WTC11 (cell line): ENCODE measurements at regions of chr16 and their contacts with region 1.

Region 1: DNA sequence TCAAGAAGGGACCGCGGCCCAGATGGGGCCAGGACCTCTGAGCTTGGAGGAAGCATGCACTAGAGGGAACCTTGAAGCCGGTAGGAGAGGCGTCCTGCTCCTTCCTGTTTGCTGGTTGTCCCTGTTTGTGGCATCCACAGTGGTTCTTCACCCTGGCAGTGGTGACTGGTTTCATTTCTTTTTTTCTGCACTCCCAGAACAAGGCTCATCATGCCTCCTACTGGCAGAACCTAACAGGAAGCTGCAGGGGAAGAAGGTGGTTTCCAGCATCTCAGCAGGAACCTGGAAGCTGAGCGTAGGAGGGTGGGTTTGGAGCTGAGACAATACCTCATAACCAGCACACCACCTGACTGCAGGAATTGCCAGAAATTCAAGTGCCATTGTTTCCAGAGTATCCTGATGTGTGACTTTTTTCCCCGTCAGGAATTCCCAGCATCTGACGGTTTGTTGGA is 5.8 kb downstream of the TMEM231 start:
- DNase-seq: peak; percentile 62
- ATAC-seq: peak; percentile 84
- H3K4me3 Mint-ChIP-seq: no peak overlapping the region
- H3K27ac Mint-ChIP-seq: peak overlapping the region; percentile 46
- H3K4me1 Mint-ChIP-seq: peaks cover 16% of the 10 kb centered on the region
- H3K27me3 Mint-ChIP-seq: no peaks in the 10 kb centered on the region
- CTCF ChIP-seq: no peak

Region 2: DNA sequence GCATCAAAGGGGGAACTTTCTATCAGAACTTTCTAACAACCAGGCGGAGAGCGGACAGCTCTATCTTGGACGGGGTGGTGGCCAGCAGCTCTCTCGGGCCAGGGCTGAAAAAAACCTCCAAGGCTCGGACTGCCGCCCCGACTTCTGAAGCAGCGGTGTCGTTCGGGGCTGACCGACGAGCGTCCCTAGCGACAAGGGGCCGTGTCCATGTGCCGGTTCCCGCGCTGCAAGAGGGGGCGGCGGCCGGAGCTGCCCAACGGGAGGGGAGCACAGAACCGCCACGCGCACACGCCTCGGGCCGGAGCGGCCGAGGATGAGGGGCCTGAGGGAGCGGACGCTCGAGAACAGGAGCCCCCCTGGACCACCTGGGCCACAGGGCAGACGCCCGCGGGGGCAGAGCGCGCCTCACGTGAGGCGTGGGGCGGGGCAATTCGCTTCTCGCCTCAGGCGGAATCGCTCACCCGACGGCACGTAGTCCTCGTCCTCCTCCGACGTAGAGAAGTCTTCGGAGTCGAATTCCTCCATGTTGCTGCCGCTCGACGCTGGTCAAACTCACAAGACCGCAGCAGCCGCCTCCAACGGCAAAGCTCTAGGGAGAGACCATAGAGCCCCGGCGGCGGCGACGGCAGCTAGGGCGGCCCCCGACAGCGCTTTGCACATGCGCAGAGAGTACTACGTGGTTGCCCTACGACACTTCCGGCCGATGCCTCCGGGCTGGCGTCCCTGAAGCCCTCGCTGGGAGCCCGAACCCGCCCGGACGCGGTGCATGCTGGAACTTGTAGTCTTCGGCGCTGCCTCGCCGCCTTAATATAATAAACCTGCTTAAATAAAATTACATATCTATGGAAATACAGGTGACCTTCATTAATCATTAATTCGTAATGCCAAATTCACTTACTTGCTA is 117.2 kb before region 1 on chr16 and contains the start of gene CFDP1:
- CTCF ChIA-PET with region 1: interaction called, 12 read pairs
- POLR2A ChIA-PET with region 1: no interaction called
- DNase-seq: peak; percentile 97
- ATAC-seq: peak; percentile 87
- H3K4me3 Mint-ChIP-seq: peak within 1 kb of the TSS; percentile 79
- H3K27ac Mint-ChIP-seq: peak within 1 kb of the TSS; percentile 97
- H3K4me1 Mint-ChIP-seq: peaks cover 22% of the 10 kb centered on the region
- H3K27me3 Mint-ChIP-seq: peaks cover 8% of the 10 kb centered on the region
- CTCF ChIP-seq: no peak
- total RNA-seq, gene CFDP1: 79.2 to 102 TPM (median 98.0 TPM) in 3 replicates

Region 3: DNA sequence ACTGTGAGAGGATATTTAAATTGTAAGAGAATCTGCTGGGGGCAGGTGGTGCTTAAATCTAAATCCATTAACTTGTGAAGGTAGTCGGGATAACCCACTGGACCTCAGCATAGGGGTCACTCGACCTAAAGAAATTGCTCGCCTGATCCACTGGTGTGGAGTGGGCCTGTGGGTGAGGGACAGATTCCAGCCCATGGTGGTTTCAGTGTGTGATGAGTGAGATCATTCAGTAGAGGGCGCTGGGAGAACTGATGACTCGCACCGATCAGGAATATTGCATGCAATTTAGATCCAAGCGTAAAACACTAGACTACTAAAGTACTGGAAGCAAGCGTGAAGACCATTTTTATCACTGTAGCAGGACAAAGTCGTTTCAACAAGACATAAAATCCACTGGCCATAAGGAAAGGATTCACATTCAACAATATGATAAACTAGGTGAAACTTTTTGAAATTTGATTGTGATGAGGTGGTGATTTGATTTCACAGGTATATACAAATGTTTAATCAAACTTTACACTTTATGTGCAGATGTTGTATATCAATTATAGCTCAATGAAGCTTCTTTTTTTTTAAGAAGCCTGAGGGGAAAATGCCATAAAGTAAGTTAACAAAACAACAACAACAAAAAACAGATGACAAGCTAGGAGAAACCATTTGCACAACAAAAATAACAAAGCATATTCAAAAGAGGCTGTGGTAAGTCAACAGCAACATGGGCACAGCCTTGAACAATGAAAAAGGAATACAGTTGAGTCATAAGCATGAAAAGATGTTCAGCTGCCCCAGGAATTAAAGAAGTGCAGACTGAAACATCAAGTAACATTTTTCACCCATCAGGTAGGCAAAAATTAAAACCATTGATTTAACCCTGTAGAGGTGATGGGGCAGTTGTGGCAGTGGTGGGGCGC is 78.3 kb before region 1 on chr16:
- CTCF ChIA-PET with region 1: interaction called, 27 read pairs
- POLR2A ChIA-PET with region 1: no interaction called
- DNase-seq: peak; percentile 48
- ATAC-seq: peak; percentile 84
- H3K4me3 Mint-ChIP-seq: peak overlapping the region; percentile 37
- H3K27ac Mint-ChIP-seq: peak overlapping the region; percentile 84
- H3K4me1 Mint-ChIP-seq: peaks cover 23% of the 10 kb centered on the region
- H3K27me3 Mint-ChIP-seq: no peaks in the 10 kb centered on the region
- CTCF ChIP-seq: peak; percentile 50; the same call in 1 of the 2 replicates

Region 4: GRCh38 chr16:75495076-75495674 is 55.1 kb before region 1 on chr16 and contains the start of gene CHST6:
- CTCF ChIA-PET with region 1: interaction called, 23 read pairs
- POLR2A ChIA-PET with region 1: interaction called, 7 read pairs
- DNase-seq: peak; percentile 82
- ATAC-seq: peak; percentile 85
- H3K4me3 Mint-ChIP-seq: peak within 1 kb of the TSS; percentile 93
- H3K27ac Mint-ChIP-seq: 0 out of 2 replicates have a peak within 1 kb of the TSS, but pooled peaks have one; percentile 76
- H3K4me1 Mint-ChIP-seq: peaks cover 19% of the 10 kb centered on the region
- H3K27me3 Mint-ChIP-seq: peaks cover 13% of the 10 kb centered on the region
- CTCF ChIP-seq: no peak
- total RNA-seq, gene CHST6: 20.2 to 23.2 TPM (median 23.1 TPM) in 3 replicates

Region 5: DNA sequence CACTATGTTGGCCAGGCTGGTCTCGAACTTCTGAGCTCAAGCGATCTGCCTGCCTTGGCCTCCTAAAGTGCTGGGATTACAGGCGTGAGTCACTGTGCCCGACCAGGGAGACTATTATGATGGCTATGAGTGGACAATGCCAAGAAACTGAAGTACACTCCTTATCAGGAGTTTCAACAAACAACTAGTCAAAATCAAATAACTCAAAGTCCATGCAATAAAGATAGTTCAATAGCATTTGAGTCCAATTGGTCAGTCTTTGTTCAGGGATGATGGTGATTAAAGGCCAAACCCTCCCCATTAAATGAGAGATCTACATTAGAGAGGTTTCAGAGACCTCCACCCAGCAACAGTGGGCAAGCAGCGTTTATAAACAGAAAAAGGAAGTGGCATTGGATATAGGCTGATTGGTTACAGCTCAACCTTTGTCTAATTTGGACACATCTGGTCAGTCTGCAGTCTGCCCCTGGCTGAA is 22.4 kb before region 1 on chr16:
- CTCF ChIA-PET with region 1: interaction called, 21 read pairs
- POLR2A ChIA-PET with region 1: interaction called, 4 read pairs
- DNase-seq: no peak
- ATAC-seq: no peak
- H3K4me3 Mint-ChIP-seq: no peak overlapping the region
- H3K27ac Mint-ChIP-seq: no peak overlapping the region
- H3K4me1 Mint-ChIP-seq: no peaks in the 10 kb centered on the region
- H3K27me3 Mint-ChIP-seq: no peaks in the 10 kb centered on the region
- CTCF ChIP-seq: no peak

Region 6: DNA sequence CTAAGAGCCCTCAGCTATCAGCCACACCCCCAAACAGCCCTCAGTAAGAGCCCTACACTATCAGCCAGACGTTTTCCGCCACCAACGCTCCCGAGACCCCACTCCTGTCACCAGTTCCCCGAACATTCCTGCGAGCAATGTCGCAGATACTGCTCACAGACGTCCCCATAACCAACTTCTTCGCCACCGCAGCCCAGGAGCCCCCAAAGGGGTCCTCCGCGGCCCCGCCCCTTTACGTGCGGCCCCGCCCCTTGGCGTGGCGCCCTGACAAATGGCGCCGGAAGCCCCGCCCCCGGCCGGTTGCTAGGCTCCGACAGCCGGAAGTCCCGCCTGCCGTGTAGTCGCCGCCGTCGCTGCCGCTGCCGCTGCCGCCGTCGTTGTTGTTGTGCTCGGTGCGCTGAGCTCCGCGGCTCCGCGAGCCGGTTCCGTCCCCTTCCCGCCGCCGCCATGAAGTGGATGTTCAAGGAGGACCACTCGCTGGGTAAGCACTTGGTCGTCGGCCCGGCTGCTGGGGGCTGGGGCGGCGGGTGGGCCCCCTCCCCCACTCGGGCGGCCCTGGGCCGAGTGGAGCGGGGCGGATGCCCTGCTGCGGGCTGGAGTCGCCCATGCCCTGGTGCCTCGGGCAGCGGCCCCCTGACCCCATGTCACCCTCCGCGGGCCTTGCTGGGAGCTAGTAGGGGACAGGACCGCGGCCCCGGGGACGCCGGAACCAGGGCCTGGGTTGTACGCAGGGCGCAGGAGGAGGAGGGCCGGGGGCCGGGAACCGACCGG is 16.0 kb after region 1 on chr16 and contains the start of gene GABARAPL2:
- CTCF ChIA-PET with region 1: interaction called, 20 read pairs
- POLR2A ChIA-PET with region 1: no interaction called
- DNase-seq: peak; percentile 95
- ATAC-seq: peak; percentile 78
- H3K4me3 Mint-ChIP-seq: peak within 1 kb of the TSS; percentile 100
- H3K27ac Mint-ChIP-seq: peak within 1 kb of the TSS; percentile 97
- H3K4me1 Mint-ChIP-seq: peaks cover 35% of the 10 kb centered on the region
- H3K27me3 Mint-ChIP-seq: no peaks in the 10 kb centered on the region
- CTCF ChIP-seq: no peak
- total RNA-seq, gene GABARAPL2: 60.8 to 63.7 TPM (median 62.7 TPM) in 3 replicates

Region 7: GRCh38 chr16:75599452-75600277 is 49.4 kb after region 1 on chr16:
- CTCF ChIA-PET with region 1: no interaction called
- POLR2A ChIA-PET with region 1: no interaction called
- DNase-seq: no peak
- ATAC-seq: no peak
- H3K4me3 Mint-ChIP-seq: no peak overlapping the region
- H3K27ac Mint-ChIP-seq: no peak overlapping the region; the same call in 1 of the 2 replicates
- H3K4me1 Mint-ChIP-seq: peaks cover 9% of the 10 kb centered on the region
- H3K27me3 Mint-ChIP-seq: no peaks in the 10 kb centered on the region
- CTCF ChIP-seq: no peak